Pancreas (tissue), 10 donors: ENCODE measurements at regions of chr14 and their contacts with region 1.

Region 1: DNA sequence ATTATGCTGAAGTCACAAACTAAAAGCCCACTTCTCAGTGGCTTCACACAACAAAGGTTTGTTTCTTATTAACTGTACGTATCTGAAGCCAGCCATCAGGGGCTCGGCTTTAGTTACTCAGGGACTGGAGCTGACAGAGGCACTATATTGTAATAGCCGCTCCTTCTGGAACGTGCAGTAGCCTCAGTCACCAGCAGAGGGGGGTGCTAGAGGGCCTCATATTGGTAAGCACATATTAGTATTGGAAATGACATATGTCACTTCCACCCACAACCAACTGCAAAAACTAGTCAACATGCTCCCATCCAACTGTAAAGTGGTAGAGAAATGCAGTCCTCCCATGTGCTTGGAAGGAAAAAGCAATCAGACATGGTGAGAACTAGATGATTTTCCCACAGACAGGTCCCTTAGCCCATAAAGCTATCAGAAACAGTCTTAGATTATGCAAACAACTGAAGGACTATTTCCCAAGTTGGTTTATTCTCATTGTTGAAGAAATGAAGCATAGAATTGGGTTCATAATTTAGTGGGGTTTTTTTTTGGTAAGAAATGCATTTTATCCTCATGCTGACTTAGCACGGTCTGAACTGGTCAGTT is 183.6 kb upstream of the G2E3 start:
- DNase-seq: peak; percentile 49 to 81 (median 70)
- ATAC-seq: peak; percentile 81 to 99 (median 96)
- H3K4me3 ChIP-seq: no peak overlapping the region
- H3K27ac ChIP-seq: no peak overlapping the region
- H3K4me1 ChIP-seq: no peaks in the 10 kb centered on the region
- H3K27me3 ChIP-seq: no peaks in the 10 kb centered on the region
- CTCF ChIP-seq: peak; percentile 58 to 77 (median 70)

Region 2: GRCh38 chr14:30243805-30244204 is 131.6 kb before region 1 on chr14:
- intact Hi-C with region 1: no loop called
- DNase-seq: no peak
- ATAC-seq: no peak
- H3K4me3 ChIP-seq: no peak overlapping the region
- H3K27ac ChIP-seq: no peak overlapping the region
- H3K4me1 ChIP-seq: no peaks in the 10 kb centered on the region
- H3K27me3 ChIP-seq: no peaks in the 10 kb centered on the region
- CTCF ChIP-seq: no peak

Region 3: GRCh38 chr14:30445011-30445793 is 69.8 kb after region 1 on chr14:
- intact Hi-C with region 1: loop called in 1 of 3 experiments (anchors 5 kb)
- DNase-seq: no peak
- ATAC-seq: peak in 3 of 4 donors; percentile 20 to 81 (median 67)
- H3K4me3 ChIP-seq: no peak overlapping the region
- H3K27ac ChIP-seq: no peak overlapping the region
- H3K4me1 ChIP-seq: no peaks in the 10 kb centered on the region
- H3K27me3 ChIP-seq: no peaks in the 10 kb centered on the region
- CTCF ChIP-seq: no peak

Region 4: DNA sequence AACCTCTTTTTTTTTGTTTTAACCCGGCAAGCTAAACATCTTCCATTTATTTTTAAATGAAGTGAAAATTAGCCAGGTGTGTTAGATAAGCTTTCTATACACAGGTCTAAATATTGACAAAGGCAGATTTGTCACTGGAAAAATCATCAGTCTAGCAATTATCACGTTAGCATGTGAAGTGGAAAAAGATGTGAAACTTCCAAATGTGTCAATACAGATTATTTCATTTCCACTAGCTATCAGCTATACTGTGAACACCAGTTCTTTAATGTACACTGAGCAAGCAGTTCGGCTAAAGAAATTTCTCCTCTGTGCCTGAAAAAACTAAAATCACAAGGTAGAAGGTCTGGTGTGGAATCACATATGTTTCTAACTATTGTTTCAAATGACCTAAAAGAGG is 87.0 kb after region 1 on chr14:
- intact Hi-C with region 1: no loop called
- DNase-seq: no peak
- ATAC-seq: peak in 3 of 4 donors; percentile 51 to 64 (median 61)
- H3K4me3 ChIP-seq: no peak overlapping the region
- H3K27ac ChIP-seq: no peak overlapping the region
- H3K4me1 ChIP-seq: peaks cover 0 to 8% (median 0%) of the 10 kb centered on the region in 3 donors
- H3K27me3 ChIP-seq: no peaks in the 10 kb centered on the region
- CTCF ChIP-seq: no peak

Region 5: DNA sequence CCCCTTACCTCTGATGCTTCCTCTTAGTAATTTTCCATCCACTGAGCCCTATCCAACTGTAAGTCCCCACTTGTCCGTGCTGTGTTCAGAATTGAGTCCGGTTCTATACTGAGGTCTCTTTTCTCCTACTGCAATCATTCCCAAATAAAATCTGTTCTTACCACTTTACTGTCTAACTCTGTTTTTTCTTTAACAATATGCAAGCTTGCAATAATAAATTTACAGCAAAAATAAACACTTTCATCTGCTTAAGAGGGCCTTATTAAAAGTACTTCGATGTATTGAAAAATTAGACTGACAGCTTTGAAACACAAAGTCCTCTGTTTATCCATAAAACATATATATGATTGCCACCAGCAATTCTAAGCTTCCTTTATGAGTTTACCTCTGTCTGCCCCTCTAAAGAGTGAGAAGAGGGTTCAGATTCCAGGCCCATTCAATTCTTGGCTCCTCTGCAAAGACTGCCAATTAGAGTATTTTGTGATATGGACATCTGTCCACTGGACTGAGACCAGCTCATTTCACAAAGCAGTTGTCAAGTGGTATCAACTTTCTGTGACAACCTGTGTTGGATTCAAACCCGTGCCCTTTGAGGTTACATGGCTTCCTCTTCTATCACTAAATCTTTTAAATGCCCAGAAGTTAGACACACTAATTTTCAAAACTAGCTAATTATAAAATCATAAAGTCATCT is 143.6 kb after region 1 on chr14:
- intact Hi-C with region 1: loop called in 1 of 3 experiments (anchors 10 kb)
- DNase-seq: no peak
- ATAC-seq: no peak
- H3K4me3 ChIP-seq: no peak overlapping the region
- H3K27ac ChIP-seq: no peak overlapping the region
- H3K4me1 ChIP-seq: peaks cover 0 to 7% (median 5%) of the 10 kb centered on the region in 3 donors
- H3K27me3 ChIP-seq: no peaks in the 10 kb centered on the region
- CTCF ChIP-seq: no peak